Activated T-helper 2 cell treated with anti-CD3 and anti-CD28 coated beads, Interferon-gamma antibody, Interleukin-2, Interleukin-4, amounts not matched to agents 10 μg/mL and 5 μg/mL and 100 μg/mL, durations not matched to agents 14 hours and 24 hours and 36 hours (primary cell): ENCODE measurements at regions of chr3 and their contacts with region 1.

Region 1: GRCh38 chr3:18717598-18717997 is 292.5 kb upstream of the SATB1 start:
- DNase-seq: no peak
- H3K4me3 Mint-ChIP-seq: peak overlapping the region; percentile 59
- H3K27ac Mint-ChIP-seq: peak overlapping the region; percentile 98
- H3K4me1 Mint-ChIP-seq: peaks cover 67% of the 10 kb centered on the region
- H3K27me3 Mint-ChIP-seq: no peaks in the 10 kb centered on the region

Region 2: DNA sequence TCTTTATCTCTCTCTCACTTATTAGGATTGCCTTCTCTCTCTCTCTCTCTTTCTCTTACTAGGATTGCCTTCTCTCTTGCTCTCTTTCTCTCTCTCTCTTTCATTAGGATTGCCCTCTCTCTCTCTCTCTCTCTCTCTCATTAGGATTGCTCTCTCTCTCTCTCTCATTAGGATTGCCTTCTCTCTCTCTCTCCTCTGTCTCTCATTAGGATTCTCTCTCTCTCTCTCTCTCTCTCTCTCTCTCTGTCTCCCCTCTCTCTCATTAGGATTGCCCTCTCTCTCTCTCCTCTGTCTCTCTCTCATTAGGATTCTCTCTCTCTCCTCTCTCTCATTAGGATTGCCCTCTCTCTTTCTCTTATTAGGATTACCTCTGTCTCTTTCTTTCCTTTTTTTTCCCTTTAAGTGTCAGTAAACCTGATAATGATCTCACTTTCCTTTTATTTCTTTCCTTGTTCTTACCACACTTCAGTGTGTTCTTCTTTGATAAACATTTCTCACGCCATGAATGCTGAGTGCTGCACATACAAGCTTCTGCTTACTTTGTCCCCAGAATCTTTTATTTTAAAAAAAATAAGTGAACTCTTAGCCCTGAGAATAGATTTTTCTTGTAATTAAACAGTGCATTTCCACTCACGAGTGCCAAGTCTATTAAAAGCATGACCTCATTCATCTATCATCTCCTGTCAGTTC is 731.8 kb before region 1 on chr3:
- intact Hi-C with region 1: no loop called
- DNase-seq: no peak
- H3K4me3 Mint-ChIP-seq: no peak overlapping the region
- H3K27ac Mint-ChIP-seq: no peak overlapping the region
- H3K4me1 Mint-ChIP-seq: no peaks in the 10 kb centered on the region
- H3K27me3 Mint-ChIP-seq: peaks cover 19% of the 10 kb centered on the region

Region 3: DNA sequence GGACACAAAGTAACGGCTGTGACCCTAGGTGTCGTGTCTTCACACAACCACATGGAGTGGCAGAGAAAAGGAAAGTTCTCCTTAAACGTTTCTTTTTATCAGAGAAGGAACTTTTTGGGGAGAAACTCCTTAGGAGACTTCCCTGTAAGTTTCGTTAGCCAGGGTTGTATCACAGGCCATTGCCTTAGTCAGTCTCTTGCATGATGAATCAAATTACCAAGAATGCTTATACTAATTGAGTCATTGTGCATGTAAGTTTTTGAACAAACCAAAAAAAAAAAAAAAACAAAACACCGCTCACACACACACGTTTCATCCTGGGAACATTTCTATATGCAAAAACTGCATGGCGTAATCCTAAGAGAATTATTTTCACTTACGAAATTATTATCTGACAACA is 142.0 kb before region 1 on chr3:
- intact Hi-C with region 1: no loop called
- DNase-seq: no peak
- H3K4me3 Mint-ChIP-seq: no peak overlapping the region
- H3K27ac Mint-ChIP-seq: no peak overlapping the region
- H3K4me1 Mint-ChIP-seq: peaks cover 15% of the 10 kb centered on the region
- H3K27me3 Mint-ChIP-seq: no peaks in the 10 kb centered on the region

Region 4: GRCh38 chr3:18649666-18650363 is 67.8 kb before region 1 on chr3:
- intact Hi-C with region 1: loop called (anchors 1 kb)
- DNase-seq: peak; percentile 49
- H3K4me3 Mint-ChIP-seq: peak overlapping the region; percentile 14
- H3K27ac Mint-ChIP-seq: peak overlapping the region; percentile 93
- H3K4me1 Mint-ChIP-seq: peaks cover 84% of the 10 kb centered on the region
- H3K27me3 Mint-ChIP-seq: no peaks in the 10 kb centered on the region

Region 5: GRCh38 chr3:18758047-18758704 is 40.6 kb after region 1 on chr3:
- intact Hi-C with region 1: loop called (anchors 5 kb)
- DNase-seq: peak; percentile 28
- H3K4me3 Mint-ChIP-seq: no peak overlapping the region
- H3K27ac Mint-ChIP-seq: peak overlapping the region; percentile 85
- H3K4me1 Mint-ChIP-seq: peaks cover 43% of the 10 kb centered on the region
- H3K27me3 Mint-ChIP-seq: no peaks in the 10 kb centered on the region

Region 6: GRCh38 chr3:18787441-18787840 is 69.8 kb after region 1 on chr3:
- intact Hi-C with region 1: no loop called
- DNase-seq: no peak
- H3K4me3 Mint-ChIP-seq: no peak overlapping the region
- H3K27ac Mint-ChIP-seq: no peak overlapping the region
- H3K4me1 Mint-ChIP-seq: peaks cover 6% of the 10 kb centered on the region
- H3K27me3 Mint-ChIP-seq: no peaks in the 10 kb centered on the region

Region 7: GRCh38 chr3:18827664-18828063 is 110.1 kb after region 1 on chr3:
- intact Hi-C with region 1: no loop called
- DNase-seq: no peak
- H3K4me3 Mint-ChIP-seq: no peak overlapping the region
- H3K27ac Mint-ChIP-seq: no peak overlapping the region
- H3K4me1 Mint-ChIP-seq: peaks cover 22% of the 10 kb centered on the region
- H3K27me3 Mint-ChIP-seq: no peaks in the 10 kb centered on the region